Transverse colon (tissue), 4 donors: ENCODE measurements at regions of chr21 and their contacts with region 1.

Region 1: GRCh38 chr21:38057628-38058027 is 141.4 kb upstream of the KCNJ6 start:
- DNase-seq: no peak
- H3K4me3 ChIP-seq: no peak overlapping the region
- H3K27ac ChIP-seq: no peak overlapping the region
- H3K4me1 ChIP-seq: no peaks in the 10 kb centered on the region
- H3K27me3 ChIP-seq: no peaks in the 10 kb centered on the region
- CTCF ChIP-seq: no peak
- EP300 ChIP-seq: no peak
- POLR2A ChIP-seq: no peak

Region 2: DNA sequence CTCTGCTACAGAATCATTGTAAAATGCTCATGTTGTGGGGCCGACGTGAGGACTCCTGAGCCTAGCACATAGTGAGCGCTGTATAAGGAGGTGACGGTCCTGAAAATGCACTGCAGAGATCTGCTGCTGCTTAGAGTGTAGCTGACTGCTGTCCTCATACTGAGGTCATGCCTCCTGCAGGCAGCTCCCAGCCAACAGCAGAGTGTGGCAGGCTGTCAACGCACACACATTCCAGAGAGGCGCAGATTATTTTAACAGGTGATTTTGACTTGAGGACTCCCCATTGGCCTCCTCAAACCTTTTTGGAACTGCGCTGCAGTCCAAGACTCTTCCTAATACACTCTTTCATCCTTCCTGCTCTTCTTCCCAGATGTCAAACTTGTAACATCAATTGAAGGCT is 21.6 kb before region 1 on chr21:
- in situ Hi-C with region 1: no loop called
- intact Hi-C with region 1: loop called (anchors 1 kb)
- DNase-seq: no peak
- H3K4me3 ChIP-seq: no peak overlapping the region
- H3K27ac ChIP-seq: no peak overlapping the region
- H3K4me1 ChIP-seq: no peaks in the 10 kb centered on the region
- H3K27me3 ChIP-seq: peaks cover 14% of the 10 kb centered on the region
- CTCF ChIP-seq: no peak
- EP300 ChIP-seq: no peak
- POLR2A ChIP-seq: no peak